ENCODE measurements at regions of chr12 and their contacts with region 1.

Region 1: DNA sequence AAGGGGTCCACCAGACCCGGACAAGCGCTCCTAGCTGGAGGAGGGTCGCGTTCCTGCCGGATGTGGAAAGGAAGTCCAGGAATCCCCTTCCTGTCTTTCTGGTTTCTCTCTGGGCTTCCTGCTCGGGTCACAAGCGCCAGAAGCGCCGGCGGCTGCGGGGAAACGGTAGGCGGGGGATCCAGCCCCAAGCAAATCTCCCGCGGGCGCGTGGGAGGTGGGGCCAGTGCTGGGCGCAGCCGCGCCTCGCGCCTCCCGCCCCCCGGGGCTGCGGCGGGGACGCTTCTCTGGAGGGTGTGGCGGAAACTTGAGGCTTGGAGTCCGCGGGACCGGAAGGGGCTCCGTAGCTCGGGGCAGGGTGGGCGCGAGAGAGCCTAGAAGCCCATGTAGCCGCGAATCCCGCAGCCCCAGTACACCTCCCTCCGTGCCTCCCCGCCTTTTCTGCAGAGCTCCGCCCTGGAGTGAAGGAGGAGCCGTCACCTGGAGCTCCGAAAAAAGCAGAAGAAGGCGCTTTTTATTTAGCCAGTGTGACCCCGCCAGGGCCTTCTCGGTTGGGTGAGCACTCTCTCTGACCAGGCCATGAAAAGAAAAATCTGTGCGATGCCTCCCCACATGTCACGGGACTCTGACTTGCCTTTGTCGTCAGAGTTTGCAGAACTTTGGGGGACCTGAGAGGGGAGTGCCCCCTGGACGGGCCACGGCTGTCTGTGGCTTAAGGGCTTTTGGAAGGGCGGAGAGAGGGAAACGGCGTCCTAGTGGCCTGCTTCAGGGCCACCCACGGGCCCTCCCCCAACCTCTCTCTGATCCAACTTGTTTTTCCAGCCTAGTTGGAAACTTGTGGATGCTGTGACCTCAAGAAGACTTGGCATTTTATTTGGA is 21.4 kb upstream of the CLEC2D start:
- DNase-seq: peak; percentile 72 to 90
- H3K4me3 ChIP-seq: peak overlapping the region; percentile 74 to 86
- H3K27ac ChIP-seq: peak overlapping the region; percentile 86 to 89
- H3K4me1 ChIP-seq: peaks cover 0 to 30% (median 14%) of the 10 kb centered on the region in 4 donors
- H3K27me3 ChIP-seq: no peaks in the 10 kb centered on the region
- CTCF ChIP-seq: no peak

Region 2: GRCh38 chr12:9064201-9064814 is 583.8 kb before region 1 on chr12:
- intact Hi-C with region 1: loop called (anchors 10 kb)
- DNase-seq: peak; percentile 70 to 77
- H3K4me3 ChIP-seq: peak overlapping the region; percentile 72 to 90
- H3K27ac ChIP-seq: peak overlapping the region; percentile 94 to 98
- H3K4me1 ChIP-seq: peaks cover 0 to 22% (median 16%) of the 10 kb centered on the region in 4 donors
- H3K27me3 ChIP-seq: no peaks in the 10 kb centered on the region
- CTCF ChIP-seq: peak; percentile 34 to 43

Region 3: DNA sequence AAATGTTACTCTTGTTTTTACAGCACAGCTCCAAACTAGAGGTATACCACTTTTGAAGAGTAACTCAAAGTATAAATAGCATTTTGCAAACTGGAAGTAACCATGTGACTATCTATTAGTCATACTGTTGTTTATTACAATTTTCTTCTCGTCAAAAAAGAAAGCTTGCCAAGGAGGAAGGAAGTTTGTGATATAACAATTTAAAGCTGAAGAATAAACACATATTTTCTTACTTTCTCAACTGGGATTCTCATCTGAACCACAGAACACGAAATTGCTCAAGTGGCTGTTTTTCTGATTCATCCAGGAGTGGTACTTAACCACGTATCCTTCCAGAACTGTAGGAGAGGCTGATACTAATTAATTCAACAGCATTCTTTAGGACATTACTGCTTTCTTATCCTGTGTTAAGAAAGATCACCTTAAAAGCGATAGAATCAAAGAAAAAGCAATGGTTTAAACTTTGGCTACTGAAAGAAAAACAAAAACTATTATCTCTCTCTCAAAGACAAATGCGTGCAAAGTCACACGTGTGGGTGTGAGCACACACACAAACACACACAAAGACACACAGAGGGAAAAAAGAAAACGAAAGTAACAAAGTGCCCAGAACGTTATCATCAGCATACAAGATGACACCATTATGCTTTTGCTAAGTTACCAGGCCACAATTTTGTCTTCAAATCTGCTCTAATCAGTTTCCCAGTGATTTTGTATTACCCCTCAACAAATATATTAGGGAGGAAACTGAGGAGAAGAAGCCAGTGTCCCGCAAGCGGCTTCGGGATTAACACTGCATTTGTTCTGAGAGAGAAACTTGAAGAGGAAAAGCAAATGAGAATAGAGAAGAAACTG is 221.5 kb after region 1 on chr12 and contains the start of gene CLEC2B:
- intact Hi-C with region 1: no loop called
- DNase-seq: no peak
- H3K4me3 ChIP-seq: peak within 1 kb of the TSS; percentile 34 to 43
- H3K27ac ChIP-seq: peak within 1 kb of the TSS; percentile 55 to 62
- H3K4me1 ChIP-seq: peaks cover 0 to 6% (median 0%) of the 10 kb centered on the region in 4 donors
- H3K27me3 ChIP-seq: no peaks in the 10 kb centered on the region
- CTCF ChIP-seq: no peak

Measured in tibial artery (tissue), 4 donors.